Activated T-helper 1 cell treated with anti-CD3 and anti-CD28 coated beads, Interleukin-12 subunit alpha, Interleukin-12 subunit beta, Interleukin-2, Interleukin-4 antibody, amounts not matched to agents 30 ng/mL and 10 ng/mL and 1 ng/mL, durations not matched to agents 14 hours and 24 hours and 36 hours (primary cell): ENCODE measurements at regions of chr11 and their contacts with region 1.

Region 1: GRCh38 chr11:68271781-68272608 is at the start of gene C11orf24:
- DNase-seq: peak; percentile 93
- H3K4me3 Mint-ChIP-seq: peak within 1 kb of the TSS; percentile 96
- H3K27ac Mint-ChIP-seq: peak within 1 kb of the TSS; percentile 93
- H3K4me1 Mint-ChIP-seq: peaks cover 23% of the 10 kb centered on the region
- H3K27me3 Mint-ChIP-seq: no peaks in the 10 kb centered on the region
- total RNA-seq, gene C11orf24: 33.9 and 39.7 TPM in 2 replicates

Region 2: DNA sequence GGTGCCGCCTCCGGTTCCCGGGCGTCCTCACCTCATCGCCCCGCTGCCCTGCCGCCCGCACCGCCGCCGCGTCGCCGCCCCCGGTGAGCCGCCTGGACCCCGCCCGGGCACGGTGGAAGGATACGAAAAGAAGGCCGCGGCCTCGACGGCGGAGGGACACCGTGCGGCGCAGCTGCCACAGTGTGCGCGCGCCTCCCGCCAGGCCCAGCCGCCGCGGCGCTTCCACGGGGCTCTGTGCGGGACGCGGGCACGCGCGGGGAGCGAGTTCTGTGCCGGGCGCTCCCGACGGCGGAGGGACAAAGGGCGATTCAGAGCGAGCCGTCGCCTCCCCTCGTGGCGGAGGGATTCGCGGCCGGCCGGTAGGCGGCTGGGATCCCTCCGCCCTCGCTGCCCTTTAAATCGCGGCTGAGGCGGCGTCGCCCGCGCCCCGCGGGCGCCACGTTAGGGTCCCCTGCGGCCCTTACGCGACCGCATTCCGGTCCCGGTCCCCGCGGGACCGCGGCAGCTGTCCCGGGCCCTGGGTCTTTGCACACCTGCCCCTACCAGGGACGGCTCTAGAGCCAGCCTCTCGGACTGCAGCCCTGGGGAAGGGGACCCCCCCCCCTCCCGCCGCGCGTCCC is 58.3 kb before region 1 on chr11:
- intact Hi-C with region 1: loop called (anchors 1 kb)
- DNase-seq: peak; percentile 76
- H3K4me3 Mint-ChIP-seq: peak overlapping the region; percentile 64
- H3K27ac Mint-ChIP-seq: no peak overlapping the region
- H3K4me1 Mint-ChIP-seq: peaks cover 44% of the 10 kb centered on the region
- H3K27me3 Mint-ChIP-seq: peaks cover 20% of the 10 kb centered on the region

Region 3: GRCh38 chr11:68282141-68282970 is 10.4 kb after region 1 on chr11:
- intact Hi-C with region 1: loop called (anchors 1 kb)
- DNase-seq: peak; percentile 38
- H3K4me3 Mint-ChIP-seq: peak overlapping the region; percentile 41
- H3K27ac Mint-ChIP-seq: peak overlapping the region; percentile 38
- H3K4me1 Mint-ChIP-seq: peaks cover 27% of the 10 kb centered on the region
- H3K27me3 Mint-ChIP-seq: peaks cover 9% of the 10 kb centered on the region

Region 4: DNA sequence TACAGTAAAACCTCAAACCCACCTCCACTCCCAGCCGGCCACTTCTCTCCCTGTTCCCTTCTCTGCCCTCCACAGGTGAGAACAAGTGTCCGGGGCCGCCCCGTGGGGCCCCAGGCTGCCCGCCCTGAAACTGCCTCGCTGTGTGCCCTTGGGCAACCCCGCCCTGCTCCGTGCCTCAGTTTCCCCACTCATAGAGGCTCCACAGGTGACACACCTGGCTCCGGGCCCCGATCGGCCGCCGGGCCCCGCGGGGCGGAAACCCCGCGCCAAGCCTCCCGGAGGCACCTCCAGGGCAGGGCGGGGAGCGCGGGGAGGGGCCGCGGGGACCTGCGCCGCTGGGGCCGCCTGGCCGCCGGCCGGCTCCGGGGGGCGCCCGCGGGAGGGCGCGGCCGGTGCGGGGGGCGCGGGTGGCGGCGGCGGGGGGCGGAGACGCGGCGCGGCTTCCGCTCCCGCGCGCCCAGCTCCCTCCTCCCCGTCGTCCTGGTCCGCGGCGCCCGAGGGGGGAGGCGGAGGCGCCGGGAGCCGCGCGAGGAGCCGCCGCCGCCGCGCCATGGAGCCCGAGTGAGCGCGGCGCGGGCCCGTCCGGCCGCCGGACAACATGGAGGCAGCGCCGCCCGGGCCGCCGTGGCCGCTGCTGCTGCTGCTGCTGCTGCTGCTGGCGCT is 40.3 kb after region 1 on chr11 and contains the start of gene LRP5:
- intact Hi-C with region 1: loop called (anchors 1 kb)
- DNase-seq: no peak
- H3K4me3 Mint-ChIP-seq: peak within 1 kb of the TSS; percentile 87
- H3K27ac Mint-ChIP-seq: peak within 1 kb of the TSS; percentile 79
- H3K4me1 Mint-ChIP-seq: peaks cover 48% of the 10 kb centered on the region
- H3K27me3 Mint-ChIP-seq: peaks cover 7% of the 10 kb centered on the region
- total RNA-seq, gene LRP5: 21.4 and 23.9 TPM in 2 replicates

Region 5: DNA sequence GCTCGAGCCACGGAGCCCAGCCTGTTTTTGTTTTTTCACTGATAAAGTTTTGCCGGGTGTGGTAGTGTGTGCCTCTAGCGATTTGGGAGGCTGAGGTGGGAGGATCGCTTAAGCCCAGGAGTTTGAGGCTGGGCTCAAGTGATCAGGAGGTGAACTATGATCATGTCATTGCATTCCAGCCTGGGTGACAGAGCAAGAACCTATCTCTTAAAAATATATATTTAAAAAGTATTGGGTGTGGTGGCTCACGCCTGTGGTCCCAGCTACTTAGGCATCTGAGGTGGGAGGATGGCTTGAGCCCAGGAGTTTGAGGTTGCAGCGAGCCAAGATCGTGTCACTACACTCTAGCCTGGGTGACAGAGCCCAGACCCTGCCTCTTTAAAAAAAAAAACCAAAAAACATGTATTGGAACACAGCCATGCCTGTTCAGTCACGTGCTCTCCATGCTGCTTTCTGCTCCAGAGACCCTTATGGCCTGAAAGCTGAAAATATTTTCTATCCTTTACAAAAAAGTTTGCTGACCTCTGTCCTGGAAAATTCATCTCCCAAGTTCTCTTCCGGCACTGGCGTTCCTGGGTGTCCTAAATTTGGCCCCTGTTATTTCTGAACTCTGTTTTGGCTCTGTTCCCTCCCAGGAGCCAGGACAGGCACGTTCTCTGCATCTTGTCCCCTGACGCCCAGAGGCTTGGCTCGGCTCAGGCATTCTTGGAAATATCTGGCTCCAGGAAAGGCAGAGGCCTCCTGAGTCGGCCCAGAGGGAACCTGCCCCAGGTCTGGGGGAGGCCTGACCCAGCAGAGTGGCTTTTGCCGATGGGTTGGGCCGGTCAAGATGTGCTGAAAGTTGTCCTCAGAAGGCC is 127.2 kb after region 1 on chr11:
- intact Hi-C with region 1: no loop called
- DNase-seq: no peak
- H3K4me3 Mint-ChIP-seq: no peak overlapping the region
- H3K27ac Mint-ChIP-seq: no peak overlapping the region
- H3K4me1 Mint-ChIP-seq: no peaks in the 10 kb centered on the region
- H3K27me3 Mint-ChIP-seq: no peaks in the 10 kb centered on the region

Region 6: DNA sequence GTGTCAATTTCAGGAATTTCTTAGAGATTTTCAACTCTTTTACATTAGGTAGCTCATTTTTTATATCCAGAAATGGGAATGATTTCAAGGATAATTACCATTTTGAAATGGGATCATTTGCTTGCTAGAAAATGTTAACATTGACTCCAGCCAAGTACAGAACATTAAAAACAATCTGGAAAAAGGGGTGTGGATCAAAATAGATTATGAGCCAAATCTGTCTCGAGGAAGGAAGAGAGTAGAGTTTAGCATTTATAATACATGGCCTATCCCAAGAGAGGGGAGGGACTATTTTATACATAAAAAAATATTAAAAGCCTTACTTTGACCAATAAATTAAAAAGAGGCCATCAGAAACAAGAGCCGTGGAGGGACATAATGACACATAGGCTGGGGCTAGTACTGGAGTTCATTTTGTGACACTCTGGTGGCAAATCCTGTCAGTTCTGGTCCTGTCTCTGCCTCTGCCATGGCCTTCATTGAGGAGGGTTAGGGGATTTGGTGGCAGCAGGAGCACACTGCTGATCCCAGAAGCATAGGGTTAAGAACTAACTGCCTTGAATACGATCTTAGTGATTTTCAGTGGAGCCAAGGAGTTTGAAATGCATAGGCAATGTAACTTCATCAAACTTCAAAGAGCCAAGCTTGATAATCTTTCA is 209.0 kb after region 1 on chr11:
- intact Hi-C with region 1: no loop called
- DNase-seq: no peak
- H3K4me3 Mint-ChIP-seq: no peak overlapping the region
- H3K27ac Mint-ChIP-seq: no peak overlapping the region
- H3K4me1 Mint-ChIP-seq: peaks cover 44% of the 10 kb centered on the region
- H3K27me3 Mint-ChIP-seq: no peaks in the 10 kb centered on the region

Region 7: GRCh38 chr11:68498321-68498720 is 226.3 kb after region 1 on chr11:
- intact Hi-C with region 1: no loop called
- DNase-seq: no peak
- H3K4me3 Mint-ChIP-seq: no peak overlapping the region
- H3K27ac Mint-ChIP-seq: no peak overlapping the region
- H3K4me1 Mint-ChIP-seq: peaks cover 33% of the 10 kb centered on the region
- H3K27me3 Mint-ChIP-seq: no peaks in the 10 kb centered on the region

Region 8: DNA sequence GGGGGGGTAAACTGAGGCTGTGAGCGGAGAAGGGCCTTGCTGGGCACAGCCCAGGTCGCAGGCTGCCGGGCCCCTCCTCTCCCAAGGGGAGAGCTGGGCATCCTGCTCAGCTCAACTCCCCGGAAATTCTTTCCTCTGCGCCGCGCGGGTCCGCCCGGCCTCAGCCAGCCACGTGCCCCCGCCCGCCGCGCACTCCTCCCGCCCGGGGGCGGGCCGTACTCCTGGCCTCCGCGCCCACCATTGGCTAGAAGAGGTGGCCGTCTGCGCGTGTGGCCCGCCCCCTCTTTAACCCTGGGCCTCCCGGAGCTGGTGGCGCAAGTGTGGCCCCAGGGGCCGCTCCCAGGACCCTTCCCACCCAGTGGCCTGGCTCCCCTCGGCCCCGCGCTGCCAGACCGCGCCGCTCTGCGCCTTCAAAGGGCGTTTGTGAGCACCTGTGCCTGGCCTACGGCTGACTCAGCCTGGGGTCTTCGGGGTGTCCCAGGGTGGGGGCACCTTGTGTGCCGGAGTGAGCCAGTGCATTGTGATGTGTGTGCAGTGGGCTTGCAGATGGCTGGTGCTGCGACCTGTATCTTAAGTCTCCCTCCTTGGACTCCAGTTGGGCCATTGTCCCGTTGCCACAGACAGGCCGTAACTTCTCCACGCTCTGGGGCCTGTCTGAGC is 739.1 kb after region 1 on chr11:
- intact Hi-C with region 1: no loop called
- DNase-seq: peak; percentile 6
- H3K4me3 Mint-ChIP-seq: no peak overlapping the region
- H3K27ac Mint-ChIP-seq: no peak overlapping the region
- H3K4me1 Mint-ChIP-seq: no peaks in the 10 kb centered on the region
- H3K27me3 Mint-ChIP-seq: peaks cover 17% of the 10 kb centered on the region